PC-3 (cell line): ENCODE measurements at regions of chr1 and their contacts with region 1.

Region 1: DNA sequence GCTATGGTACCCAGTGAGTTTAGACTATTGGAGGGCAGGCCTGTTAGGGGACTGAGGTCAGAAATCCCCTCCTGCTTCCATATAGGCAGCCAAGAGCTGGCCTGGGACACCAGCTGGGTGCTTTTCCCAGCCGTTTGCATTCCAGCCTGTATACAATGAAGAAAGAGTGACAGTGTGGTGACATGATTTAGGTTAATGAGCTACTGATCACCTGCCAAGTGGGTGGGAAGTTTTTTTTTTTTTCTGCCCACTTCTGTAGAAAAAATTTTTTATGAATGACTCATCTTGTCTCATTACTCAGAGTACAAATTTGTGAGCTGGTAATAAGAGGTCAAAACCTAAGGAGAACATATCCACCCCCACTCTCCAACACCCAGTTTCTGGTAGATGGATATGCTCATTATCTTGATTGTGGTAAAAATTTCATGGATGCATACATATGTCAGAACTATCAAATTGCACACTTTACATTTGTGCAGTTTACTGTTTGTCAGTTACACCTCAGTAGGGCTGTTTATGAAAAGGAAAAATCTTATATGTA is 16.4 kb upstream of the CGN start:
- DNase-seq: peak; percentile 92
- ATAC-seq: peak; percentile 88
- H3K4me3 ChIP-seq: no peak overlapping the region
- H3K27ac ChIP-seq: peak overlapping the region; percentile 6; the same call in 1 of the 2 replicates
- H3K4me1 ChIP-seq: peaks cover 16% of the 10 kb centered on the region
- H3K27me3 ChIP-seq: no peaks in the 10 kb centered on the region
- CTCF ChIP-seq: no peak

Region 2: GRCh38 chr1:151156515-151156819 is 338.3 kb before region 1 on chr1 and contains the start of gene TNFAIP8L2:
- CTCF ChIA-PET with region 1: no interaction called
- POLR2A ChIA-PET with region 1: interaction called, 15 read pairs
- intact Hi-C with region 1: no loop called
- DNase-seq: no peak
- ATAC-seq: peak; percentile 81
- H3K4me3 ChIP-seq: no peak within 1 kb of the TSS
- H3K27ac ChIP-seq: no peak within 1 kb of the TSS
- H3K4me1 ChIP-seq: no peaks in the 10 kb centered on the region
- H3K27me3 ChIP-seq: no peaks in the 10 kb centered on the region
- CTCF ChIP-seq: no peak
- total RNA-seq, gene TNFAIP8L2: not detected in 2 replicates

Region 3: GRCh38 chr1:151459331-151460046 is 35.3 kb before region 1 on chr1 and contains the start of gene POGZ:
- CTCF ChIA-PET with region 1: interaction called, 4 read pairs
- POLR2A ChIA-PET with region 1: interaction called, 17 read pairs
- intact Hi-C with region 1: no loop called
- DNase-seq: peak; percentile 97
- ATAC-seq: peak; percentile 81
- H3K4me3 ChIP-seq: peak within 1 kb of the TSS; percentile 100
- H3K27ac ChIP-seq: peak within 1 kb of the TSS; percentile 79
- H3K4me1 ChIP-seq: peaks cover 12% of the 10 kb centered on the region
- H3K27me3 ChIP-seq: no peaks in the 10 kb centered on the region
- CTCF ChIP-seq: no peak
- total RNA-seq, gene POGZ: 30.5 and 77.9 TPM in 2 replicates

Region 4: GRCh38 chr1:151472856-151473731 is 21.7 kb before region 1 on chr1:
- CTCF ChIA-PET with region 1: interaction called, 10 read pairs
- POLR2A ChIA-PET with region 1: no interaction called
- intact Hi-C with region 1: no loop called
- DNase-seq: peak; percentile 43
- ATAC-seq: peak; percentile 51
- H3K4me3 ChIP-seq: peak overlapping the region; percentile 41
- H3K27ac ChIP-seq: no peak overlapping the region
- H3K4me1 ChIP-seq: no peaks in the 10 kb centered on the region
- H3K27me3 ChIP-seq: no peaks in the 10 kb centered on the region
- CTCF ChIP-seq: no peak

Region 5: DNA sequence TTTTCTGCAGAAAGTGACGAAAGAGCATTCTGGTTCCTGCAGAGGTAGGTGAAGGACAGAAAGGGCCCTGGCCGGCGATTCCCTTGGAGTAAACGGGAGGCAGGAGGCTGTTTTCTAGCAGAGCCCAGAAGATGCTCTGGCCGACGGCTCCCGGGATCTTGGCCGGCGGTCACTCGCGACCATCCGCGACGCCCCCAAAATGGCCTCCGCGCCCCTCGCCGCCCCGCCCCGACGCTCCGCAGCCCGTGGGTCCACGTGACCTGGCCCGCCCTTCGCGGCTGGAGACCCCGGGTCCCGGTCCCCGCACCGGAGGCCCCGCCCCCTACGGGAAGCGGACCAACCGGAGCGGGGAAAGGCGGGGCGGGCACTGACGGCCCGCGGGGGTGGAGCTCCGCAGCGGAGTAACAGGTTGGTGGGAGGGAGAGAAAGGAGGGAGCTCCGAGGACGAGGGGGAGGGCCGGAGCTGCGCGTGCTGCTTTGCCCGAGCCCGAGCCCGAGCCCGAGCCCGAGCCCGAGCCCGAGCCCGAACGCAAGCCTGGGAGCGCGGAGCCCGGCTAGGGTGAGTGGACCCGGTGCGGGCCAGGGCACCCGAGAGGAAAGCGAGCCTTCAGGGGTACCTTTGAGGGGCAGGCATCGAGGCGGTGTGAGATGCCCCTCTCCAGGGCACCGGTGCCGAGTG is 16.3 kb after region 1 on chr1 and contains the start of gene CGN:
- CTCF ChIA-PET with region 1: interaction called, 3 read pairs
- POLR2A ChIA-PET with region 1: interaction called, 17 read pairs
- intact Hi-C with region 1: loop called (anchors 2 kb)
- DNase-seq: peak; percentile 95
- ATAC-seq: peak; percentile 80
- H3K4me3 ChIP-seq: peak within 1 kb of the TSS; percentile 84
- H3K27ac ChIP-seq: peak within 1 kb of the TSS; percentile 96
- H3K4me1 ChIP-seq: peaks cover 50% of the 10 kb centered on the region
- H3K27me3 ChIP-seq: no peaks in the 10 kb centered on the region
- CTCF ChIP-seq: no peak
- total RNA-seq, gene CGN: 13.3 and 20.1 TPM in 2 replicates

Region 6: DNA sequence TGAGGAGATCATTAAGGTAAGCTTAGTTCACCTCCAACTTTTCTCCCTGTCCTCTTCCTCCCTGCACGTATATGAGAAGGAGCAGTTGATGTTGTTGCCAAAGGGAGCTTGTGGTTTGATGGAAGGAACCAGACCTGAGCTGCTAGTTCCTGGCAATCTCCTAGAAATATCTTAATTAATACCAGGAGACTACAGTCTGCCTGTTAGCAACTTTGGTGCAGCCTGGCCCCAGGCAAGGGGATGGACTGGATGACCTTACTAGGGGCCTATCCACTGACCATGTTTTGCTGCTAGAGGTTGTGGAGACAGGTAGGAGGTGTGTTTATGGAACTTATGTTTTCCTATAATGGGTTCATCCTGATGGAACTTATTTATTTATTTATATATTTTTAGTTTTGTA is 67.9 kb after region 1 on chr1:
- CTCF ChIA-PET with region 1: interaction called, 10 read pairs
- POLR2A ChIA-PET with region 1: no interaction called
- intact Hi-C with region 1: no loop called
- DNase-seq: no peak
- ATAC-seq: no peak
- H3K4me3 ChIP-seq: no peak overlapping the region
- H3K27ac ChIP-seq: no peak overlapping the region
- H3K4me1 ChIP-seq: peaks cover 31% of the 10 kb centered on the region
- H3K27me3 ChIP-seq: no peaks in the 10 kb centered on the region
- CTCF ChIP-seq: no peak